Activated T-helper 2 cell treated with anti-CD3 and anti-CD28 coated beads, Interferon-gamma antibody, Interleukin-2, Interleukin-4, amounts not matched to agents 10 μg/mL and 5 μg/mL and 100 μg/mL, durations not matched to agents 14 hours and 24 hours and 36 hours (primary cell): ENCODE measurements at regions of chr13 and their contacts with region 1.

Region 1: GRCh38 chr13:25286969-25287961 is at the start of gene MTMR6:
- DNase-seq: peak; percentile 92
- H3K4me3 Mint-ChIP-seq: peak within 1 kb of the TSS; percentile 92
- H3K27ac Mint-ChIP-seq: peak within 1 kb of the TSS; percentile 95
- H3K4me1 Mint-ChIP-seq: peaks cover 30% of the 10 kb centered on the region
- H3K27me3 Mint-ChIP-seq: peaks cover 17% of the 10 kb centered on the region
- total RNA-seq, gene MTMR6: 16.3 and 16.5 TPM in 2 replicates

Region 2: DNA sequence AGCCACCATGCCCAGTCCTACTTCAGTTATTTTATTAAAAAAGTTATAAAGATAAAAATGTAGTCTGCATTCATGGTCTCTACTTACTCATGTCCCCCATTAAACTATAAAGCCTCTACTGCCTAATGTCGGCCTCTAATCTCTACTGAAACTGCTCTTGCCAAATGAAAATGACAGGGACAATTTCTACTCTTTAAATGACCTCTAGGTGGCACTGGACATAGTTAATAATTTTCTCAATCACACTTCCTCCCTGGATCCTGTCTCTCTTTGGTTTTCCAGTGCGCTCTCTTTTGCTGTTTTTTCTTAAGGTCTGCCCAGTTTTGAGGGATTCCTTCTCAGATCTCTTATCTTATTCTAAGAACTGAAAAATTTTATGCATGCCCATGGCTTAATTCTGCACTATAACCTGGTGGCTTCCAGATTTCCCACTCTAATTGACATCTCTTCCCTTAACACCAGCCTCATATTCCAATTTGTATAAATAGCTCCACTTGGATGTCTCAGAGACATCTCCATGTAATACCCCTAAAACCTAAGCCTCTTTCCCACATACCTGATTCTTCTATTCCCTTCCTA is 54.2 kb before region 1 on chr13:
- intact Hi-C with region 1: loop called (anchors 2 kb)
- DNase-seq: no peak
- H3K4me3 Mint-ChIP-seq: no peak overlapping the region
- H3K27ac Mint-ChIP-seq: no peak overlapping the region
- H3K4me1 Mint-ChIP-seq: no peaks in the 10 kb centered on the region
- H3K27me3 Mint-ChIP-seq: no peaks in the 10 kb centered on the region

Region 3: GRCh38 chr13:25267715-25268114 is 19.6 kb before region 1 on chr13:
- intact Hi-C with region 1: loop called (anchors 1 kb)
- DNase-seq: no peak
- H3K4me3 Mint-ChIP-seq: no peak overlapping the region
- H3K27ac Mint-ChIP-seq: no peak overlapping the region
- H3K4me1 Mint-ChIP-seq: peaks cover 3% of the 10 kb centered on the region
- H3K27me3 Mint-ChIP-seq: no peaks in the 10 kb centered on the region

Region 4: DNA sequence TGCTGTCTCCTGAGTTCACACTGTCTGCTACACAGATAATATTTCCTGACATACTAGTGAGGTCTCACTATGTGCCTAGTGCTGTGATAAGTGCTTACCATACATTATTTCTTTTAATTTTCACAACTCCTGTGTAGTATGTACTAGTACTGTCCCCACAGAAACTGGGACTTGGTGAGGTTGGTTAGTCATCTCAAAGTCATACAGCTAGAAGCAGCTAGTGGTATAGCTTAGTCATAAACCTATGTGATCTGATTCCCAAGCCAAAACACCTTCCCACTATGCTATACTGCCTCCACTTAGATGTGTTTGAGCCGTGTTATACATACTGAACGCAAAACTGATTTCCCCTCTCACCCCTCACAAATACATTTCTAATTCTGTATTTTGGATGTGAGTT is 10.5 kb before region 1 on chr13:
- intact Hi-C with region 1: loop called (anchors 1 kb)
- DNase-seq: no peak
- H3K4me3 Mint-ChIP-seq: no peak overlapping the region
- H3K27ac Mint-ChIP-seq: no peak overlapping the region
- H3K4me1 Mint-ChIP-seq: peaks cover 34% of the 10 kb centered on the region
- H3K27me3 Mint-ChIP-seq: no peaks in the 10 kb centered on the region

Region 5: DNA sequence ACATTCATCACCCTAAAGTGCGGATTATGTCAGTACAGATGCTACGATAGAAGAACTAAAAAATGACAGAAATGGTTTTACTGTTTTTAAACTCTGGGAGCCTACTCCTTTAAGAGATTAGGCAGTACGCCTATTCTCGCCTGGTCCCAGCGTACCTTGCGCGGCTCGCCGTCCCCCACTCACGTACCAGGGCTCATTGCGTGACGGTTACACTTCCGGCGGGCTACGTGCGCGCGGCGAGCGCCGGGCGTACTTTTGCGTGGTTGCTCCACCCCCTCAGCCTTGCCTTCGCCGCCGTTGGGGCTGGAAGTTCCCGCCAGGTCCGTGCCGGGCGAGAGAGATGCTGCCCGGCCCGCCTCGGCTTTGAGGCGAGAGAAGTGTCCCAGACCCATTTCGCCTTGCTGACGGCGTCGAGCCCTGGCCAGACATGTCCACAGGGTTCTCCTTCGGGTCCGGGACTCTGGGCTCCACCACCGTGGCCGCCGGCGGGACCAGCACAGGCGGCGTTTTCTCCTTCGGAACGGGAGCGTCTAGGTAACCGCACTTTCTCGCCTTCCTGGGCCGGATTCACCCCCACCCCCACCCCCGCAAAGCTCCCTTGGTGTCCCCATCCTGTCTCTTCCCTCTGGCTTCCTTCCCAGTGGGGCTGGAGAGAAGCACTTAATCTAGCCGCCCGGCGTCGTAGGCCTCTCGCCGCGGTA is 14.2 kb after region 1 on chr13 and contains the start of gene NUP58:
- intact Hi-C with region 1: loop called (anchors 1 kb)
- DNase-seq: peak; percentile 93
- H3K4me3 Mint-ChIP-seq: peak within 1 kb of the TSS; percentile 94
- H3K27ac Mint-ChIP-seq: peak within 1 kb of the TSS; percentile 91
- H3K4me1 Mint-ChIP-seq: peaks cover 35% of the 10 kb centered on the region
- H3K27me3 Mint-ChIP-seq: peaks cover 17% of the 10 kb centered on the region
- total RNA-seq, gene NUP58: 129 and 131 TPM in 2 replicates

Region 6: GRCh38 chr13:25489238-25489637 is 202.0 kb after region 1 on chr13:
- intact Hi-C with region 1: no loop called
- DNase-seq: no peak
- H3K4me3 Mint-ChIP-seq: no peak overlapping the region
- H3K27ac Mint-ChIP-seq: no peak overlapping the region
- H3K4me1 Mint-ChIP-seq: no peaks in the 10 kb centered on the region
- H3K27me3 Mint-ChIP-seq: peaks cover 2% of the 10 kb centered on the region